Panc1 (cell line): ENCODE measurements at regions of chr6 and their contacts with region 1.

Region 1: DNA sequence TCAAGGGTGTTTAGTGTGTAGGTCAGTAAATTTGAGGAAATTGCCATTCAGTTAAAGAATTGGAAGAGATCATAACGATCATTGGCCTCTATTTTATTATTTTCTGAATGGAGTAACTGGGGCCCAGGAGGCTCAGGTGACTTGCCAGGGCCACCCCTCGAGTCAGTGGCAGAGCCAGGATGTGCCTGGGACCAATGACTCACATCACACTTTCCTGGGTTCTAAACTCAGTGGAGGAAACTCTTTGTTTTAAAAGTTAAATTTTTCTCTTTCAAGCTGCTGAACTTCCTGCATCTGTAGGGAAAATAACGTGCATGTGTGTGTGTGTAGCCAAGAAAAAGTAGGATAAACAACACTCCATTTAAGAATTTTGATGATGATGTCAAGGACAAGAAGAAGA is 135.5 kb downstream of the MYLK4 start:
- DNase-seq: no peak
- ATAC-seq: no peak
- H3K4me3 ChIP-seq: no peak overlapping the region
- H3K27ac ChIP-seq: no peak overlapping the region
- H3K4me1 ChIP-seq: no peaks in the 10 kb centered on the region
- H3K27me3 ChIP-seq: no peaks in the 10 kb centered on the region; the same call in 1 of the 2 replicates
- CTCF ChIP-seq: no peak

Region 2: DNA sequence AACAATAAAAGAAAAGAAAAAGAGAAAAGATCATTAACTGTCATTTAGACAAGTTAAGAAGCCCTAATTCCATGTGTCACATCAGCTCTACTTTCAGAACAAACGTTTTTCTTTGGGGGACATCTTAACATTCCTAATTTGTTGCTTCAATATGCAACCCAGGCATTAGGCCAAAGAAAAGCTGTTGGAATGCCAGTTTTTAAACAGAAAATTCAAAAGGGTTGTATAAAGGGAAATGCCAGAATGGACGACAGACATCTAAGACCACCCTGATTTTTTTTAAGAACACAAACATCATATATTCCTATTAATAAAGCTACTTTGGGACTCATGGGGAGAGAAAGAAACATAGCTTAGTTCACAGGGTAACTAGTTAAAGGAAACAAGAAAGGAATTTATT is 684.9 kb before region 1 on chr6:
- CTCF ChIA-PET with region 1: no interaction called
- POLR2A ChIA-PET with region 1: no interaction called
- in situ Hi-C with region 1: no loop called
- intact Hi-C with region 1: no loop called
- DNase-seq: no peak
- ATAC-seq: no peak
- H3K4me3 ChIP-seq: no peak overlapping the region
- H3K27ac ChIP-seq: no peak overlapping the region
- H3K4me1 ChIP-seq: no peaks in the 10 kb centered on the region
- H3K27me3 ChIP-seq: no peaks in the 10 kb centered on the region
- CTCF ChIP-seq: no peak

Region 3: GRCh38 chr6:2589171-2589661 is 26.0 kb before region 1 on chr6:
- CTCF ChIA-PET with region 1: no interaction called
- POLR2A ChIA-PET with region 1: interaction called, 10 read pairs
- in situ Hi-C with region 1: no loop called
- intact Hi-C with region 1: no loop called
- DNase-seq: no peak
- ATAC-seq: no peak
- H3K4me3 ChIP-seq: no peak overlapping the region
- H3K27ac ChIP-seq: no peak overlapping the region
- H3K4me1 ChIP-seq: no peaks in the 10 kb centered on the region
- H3K27me3 ChIP-seq: no peaks in the 10 kb centered on the region
- CTCF ChIP-seq: no peak

Region 4: DNA sequence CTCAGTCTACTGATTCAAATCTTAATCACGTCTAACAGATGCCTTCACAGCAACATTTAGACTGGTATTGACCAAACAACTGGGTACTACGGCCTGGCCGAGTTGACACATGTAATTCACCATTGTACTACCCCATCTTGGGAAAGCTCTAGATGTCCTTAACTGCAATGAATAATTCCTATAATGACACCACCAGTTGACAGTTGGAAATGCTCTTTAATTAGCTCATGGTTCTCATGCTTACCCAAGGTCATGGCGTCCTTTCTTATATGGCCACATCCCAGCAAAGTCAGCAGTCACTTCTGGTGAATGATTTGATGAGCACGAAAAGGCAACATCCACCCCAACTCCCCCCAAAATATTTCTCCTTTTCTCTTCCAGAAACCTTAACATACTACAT is 15.4 kb before region 1 on chr6:
- CTCF ChIA-PET with region 1: no interaction called
- POLR2A ChIA-PET with region 1: no interaction called
- in situ Hi-C with region 1: no loop called
- intact Hi-C with region 1: no loop called
- DNase-seq: no peak
- ATAC-seq: no peak
- H3K4me3 ChIP-seq: no peak overlapping the region
- H3K27ac ChIP-seq: no peak overlapping the region
- H3K4me1 ChIP-seq: no peaks in the 10 kb centered on the region
- H3K27me3 ChIP-seq: 0 out of 2 replicates have a peak, but pooled peaks cover 2% of the 10 kb centered on the region
- CTCF ChIP-seq: no peak

Region 5: DNA sequence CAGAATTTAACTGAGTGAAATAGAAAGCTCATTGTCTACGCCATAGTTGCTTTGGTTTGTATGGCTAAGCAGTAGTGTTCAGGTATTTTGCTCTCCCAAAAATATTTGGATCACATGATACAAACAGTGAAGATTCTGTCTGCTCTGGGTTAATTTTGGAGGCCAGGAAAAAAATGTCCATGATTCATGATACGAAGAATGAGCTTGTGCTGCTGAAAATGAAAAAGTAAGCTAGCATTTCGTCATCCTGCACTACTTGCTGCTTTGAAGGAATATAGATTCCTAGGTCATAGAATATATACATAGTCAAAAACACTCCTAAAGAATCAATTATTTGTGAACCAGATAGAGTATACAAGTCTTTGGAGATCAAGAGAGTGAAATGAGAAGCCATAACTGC is 158.2 kb after region 1 on chr6:
- CTCF ChIA-PET with region 1: no interaction called
- POLR2A ChIA-PET with region 1: no interaction called
- in situ Hi-C with region 1: no loop called
- intact Hi-C with region 1: no loop called
- DNase-seq: no peak
- ATAC-seq: no peak
- H3K4me3 ChIP-seq: no peak overlapping the region
- H3K27ac ChIP-seq: no peak overlapping the region
- H3K4me1 ChIP-seq: peaks cover 16% of the 10 kb centered on the region
- H3K27me3 ChIP-seq: no peaks in the 10 kb centered on the region
- CTCF ChIP-seq: no peak